Left cardiac atrium (tissue), 4 donors: ENCODE measurements at regions of chr7 and their contacts with region 1.

Region 1: DNA sequence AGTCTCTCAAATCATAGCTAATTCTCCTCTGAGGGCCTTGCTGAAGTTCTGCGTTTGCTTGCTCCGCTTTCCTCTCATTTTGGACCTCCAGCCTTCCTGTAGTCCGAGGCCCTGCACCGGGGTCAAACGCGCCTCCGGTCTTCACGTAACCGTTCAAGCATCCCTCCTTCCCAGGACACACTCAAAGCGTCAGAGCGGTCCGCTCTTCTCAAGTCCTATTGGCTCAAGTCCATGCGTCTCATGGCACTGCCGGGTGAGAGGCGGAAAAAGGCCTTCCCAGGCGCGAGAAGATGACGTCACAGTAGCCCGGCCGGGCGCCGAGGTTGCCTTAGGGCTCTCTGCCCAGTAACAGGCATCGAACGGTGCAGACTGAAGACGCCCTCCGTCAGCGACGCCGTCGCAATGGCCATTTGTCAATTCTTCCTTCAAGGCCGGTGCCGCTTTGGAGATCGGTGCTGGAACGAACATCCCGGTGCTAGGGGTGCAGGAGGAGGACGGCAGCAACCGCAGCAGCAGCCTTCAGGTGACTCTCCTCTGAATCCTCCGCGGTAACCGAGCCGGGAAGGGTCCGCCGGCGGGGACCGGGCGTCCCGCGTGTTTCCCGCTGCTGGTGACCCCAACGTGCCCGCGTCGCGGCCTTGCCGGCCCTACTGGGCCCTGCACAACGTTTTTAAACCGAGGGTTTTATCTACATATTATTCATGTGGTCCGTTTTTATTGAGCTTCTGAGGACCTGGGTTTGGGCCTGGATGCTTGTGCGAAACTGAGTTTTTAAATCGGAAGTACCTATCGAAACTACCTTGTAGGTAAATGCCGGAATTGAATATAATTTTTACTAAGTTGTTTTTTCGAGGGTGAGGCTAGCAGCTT is at the start of gene NUP42:
- DNase-seq: peak; percentile 96
- ATAC-seq: peak; percentile 96 to 98
- total RNA-seq, gene NUP42: 21.8 to 23.3 TPM

Region 2: DNA sequence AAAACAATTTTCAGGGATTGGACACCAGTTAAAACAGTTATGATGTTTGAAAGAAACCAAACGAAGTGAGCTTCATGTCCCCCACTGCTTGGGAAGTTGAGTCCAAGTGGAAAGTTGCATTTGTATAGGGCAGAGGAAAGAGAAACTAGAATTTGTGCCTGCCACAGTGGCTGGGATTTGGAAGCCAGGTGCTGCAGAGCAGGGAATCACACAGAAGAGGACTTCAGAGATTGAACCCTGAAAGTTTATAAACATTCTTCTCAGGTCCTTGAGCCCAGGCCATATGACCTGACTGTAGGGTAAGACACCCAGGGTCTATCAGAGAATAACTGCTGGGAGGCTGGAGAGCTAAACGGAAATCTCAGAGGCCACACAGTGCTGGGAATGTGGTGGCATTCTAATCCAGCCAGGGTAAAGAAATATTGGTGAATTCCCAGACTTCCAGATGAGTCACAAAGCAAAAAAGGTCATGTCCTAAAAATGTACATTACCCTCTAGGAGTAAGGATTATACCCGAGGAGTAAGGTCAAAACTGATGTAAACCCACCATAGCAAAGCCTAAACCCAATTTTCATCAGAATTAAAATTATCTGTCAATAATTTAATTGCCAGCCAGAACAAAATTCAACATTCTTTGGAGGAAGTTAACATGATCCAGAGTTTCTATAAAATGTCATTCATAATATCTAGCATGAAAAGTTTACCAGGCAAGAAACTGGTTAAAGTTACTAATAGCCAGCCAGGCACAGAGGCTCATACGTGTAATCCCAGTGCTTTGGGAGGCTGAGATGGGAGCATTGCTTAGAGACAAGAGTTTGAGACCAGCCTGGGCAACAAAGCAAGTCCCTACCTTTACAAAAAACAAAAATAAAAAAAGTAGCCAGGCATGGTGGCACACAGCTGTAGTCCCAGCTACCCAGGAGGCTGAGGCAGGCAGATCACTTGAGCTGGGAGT is 390.4 kb before region 1 on chr7:
- intact Hi-C with region 1: no loop called
- DNase-seq: no peak
- ATAC-seq: no peak

Region 3: DNA sequence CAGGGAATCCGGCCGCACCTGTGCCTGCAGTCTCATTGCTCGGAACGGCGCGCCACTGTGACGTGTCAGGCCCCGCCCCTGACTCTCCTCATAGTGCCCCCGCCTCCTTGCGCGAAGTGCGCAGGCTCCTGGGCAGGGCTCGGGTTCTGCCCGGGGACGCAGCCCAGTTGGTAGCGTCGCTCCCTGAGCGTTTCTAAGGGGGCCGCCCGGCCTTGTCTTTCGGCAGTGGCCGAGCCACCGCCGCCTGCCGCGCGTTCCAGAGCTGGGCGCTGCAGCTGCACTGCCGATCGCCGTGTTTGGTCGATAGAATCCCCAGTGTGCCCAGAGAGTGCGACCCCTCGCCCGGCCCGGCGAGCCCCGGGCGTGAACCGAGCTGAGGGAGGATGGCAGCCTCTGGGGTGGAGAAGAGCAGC is 76.3 kb before region 1 on chr7 and contains the start of gene KLHL7:
- intact Hi-C with region 1: loop called (anchors 1 to 10 kb)
- DNase-seq: peak; percentile 97
- ATAC-seq: peak; percentile 99 to 100
- total RNA-seq, gene KLHL7: 68.3 to 81.6 TPM

Region 4: GRCh38 chr7:23247603-23248335 is 65.8 kb after region 1 on chr7:
- intact Hi-C with region 1: loop called in 1 of 2 experiments (anchors 5 kb)
- DNase-seq: peak; percentile 58
- ATAC-seq: peak; percentile 73 to 82

Region 5: GRCh38 chr7:23261843-23262452 is 80.0 kb after region 1 on chr7:
- intact Hi-C with region 1: loop called in 1 of 2 experiments (anchors 5 kb)
- DNase-seq: peak; percentile 63
- ATAC-seq: peak in 1 of 2 donors; percentile 91